ENCODE measurements at regions of chr12 and their contacts with region 1.

Region 1: DNA sequence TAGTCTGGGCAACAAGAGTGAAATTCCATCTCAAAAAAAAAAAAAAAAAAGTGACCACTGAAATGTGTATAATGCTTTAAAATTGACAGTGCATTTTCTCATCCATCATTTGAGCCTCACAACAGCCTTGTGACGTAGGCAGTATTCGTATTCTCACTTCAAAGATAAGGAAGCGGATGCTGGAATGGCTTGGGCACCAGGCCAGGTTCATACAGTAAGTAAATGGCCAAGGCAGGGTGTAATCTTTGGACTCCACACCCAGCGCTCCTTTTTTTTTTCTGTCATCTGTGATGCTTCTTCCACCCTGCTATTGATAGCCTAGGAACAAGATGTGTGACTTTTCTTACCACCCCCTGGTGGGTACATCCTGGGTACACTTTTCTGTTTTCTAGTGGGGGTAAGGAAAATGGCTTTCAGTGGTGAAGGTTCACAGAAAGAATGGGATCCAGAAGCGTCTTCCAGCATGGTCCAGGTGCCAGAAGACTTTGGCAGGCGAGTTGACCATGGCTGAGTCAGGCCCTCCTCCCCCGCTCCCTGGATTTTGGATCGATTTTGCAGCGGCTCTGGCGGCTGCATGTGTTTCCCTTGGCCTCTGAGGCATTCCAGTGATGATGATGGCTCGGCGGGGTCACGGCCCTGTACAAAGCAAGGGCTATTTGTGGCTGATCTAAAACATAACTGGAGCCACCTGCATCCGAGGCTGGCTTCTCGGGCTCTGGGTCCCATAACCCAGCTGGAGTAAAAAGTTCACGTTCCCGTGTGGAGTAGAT is 110.6 kb downstream of the CACNA1C start:
- DNase-seq: peak; percentile 91 to 95 (median 93)
- ATAC-seq: peak; percentile 79 to 94 (median 91)
- H3K4me3 ChIP-seq: no peak overlapping the region
- H3K27ac ChIP-seq: peak overlapping the region; percentile 60 to 86 (median 82)
- H3K4me1 ChIP-seq: peaks cover 4 to 67% (median 43%) of the 10 kb centered on the region in 12 donors
- H3K27me3 ChIP-seq: no peaks in the 10 kb centered on the region
- CTCF ChIP-seq: peak in 4 of 12 donors; percentile 5 to 14 (median 8)
- POLR2A ChIP-seq: no peak

Region 2: GRCh38 chr12:949453-950191 is 1213.7 kb before region 1 on chr12 and contains the start of gene RAD52:
- intact Hi-C with region 1: no loop called
- DNase-seq: peak; percentile 98 to 99 (median 98)
- ATAC-seq: peak; percentile 97 to 98 (median 97)
- H3K4me3 ChIP-seq: peak within 1 kb of the TSS; percentile 68 to 94 (median 82)
- H3K27ac ChIP-seq: peak within 1 kb of the TSS; percentile 76 to 98 (median 92)
- H3K4me1 ChIP-seq: peaks cover 0 to 22% (median 12%) of the 10 kb centered on the region in 12 donors
- H3K27me3 ChIP-seq: no peaks in the 10 kb centered on the region
- CTCF ChIP-seq: peak; percentile 95 to 100 (median 99)
- POLR2A ChIP-seq: peak in 1 of 2 donors; percentile 48
- total RNA-seq, gene RAD52: 4.1 to 9.7 (median 6.2) TPM

Region 3: DNA sequence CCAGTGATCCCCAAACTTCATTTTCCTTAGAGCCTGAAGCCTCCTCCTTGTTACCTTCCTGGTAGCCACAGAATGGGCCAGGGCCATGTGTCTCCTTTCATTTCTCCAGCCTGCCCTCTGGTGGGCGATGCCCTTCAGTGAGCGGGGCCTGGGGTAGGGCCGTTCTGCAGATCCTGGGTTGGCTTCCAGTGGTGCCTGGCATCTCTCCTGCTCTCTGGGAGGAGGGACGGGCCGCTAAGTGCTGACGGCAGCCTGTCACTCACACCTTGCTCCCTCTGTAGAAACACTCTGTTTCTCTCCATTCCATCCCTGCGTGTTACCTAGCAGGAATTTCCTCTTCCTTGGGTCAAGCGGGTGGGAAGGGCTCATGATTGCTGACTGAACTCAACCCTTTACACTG is 121.5 kb after region 1 on chr12:
- intact Hi-C with region 1: loop called in 1 of 10 experiments (anchors 10 kb)
- DNase-seq: peak; percentile 79 to 92 (median 89)
- ATAC-seq: peak; percentile 77 to 87 (median 82)
- H3K4me3 ChIP-seq: no peak overlapping the region
- H3K27ac ChIP-seq: peak overlapping the region in 10 of 12 donors; percentile 58 to 82 (median 76)
- H3K4me1 ChIP-seq: peaks cover 4 to 88% (median 79%) of the 10 kb centered on the region in 12 donors
- H3K27me3 ChIP-seq: no peaks in the 10 kb centered on the region
- CTCF ChIP-seq: peak; percentile 45 to 77 (median 64)
- POLR2A ChIP-seq: no peak

Region 4: DNA sequence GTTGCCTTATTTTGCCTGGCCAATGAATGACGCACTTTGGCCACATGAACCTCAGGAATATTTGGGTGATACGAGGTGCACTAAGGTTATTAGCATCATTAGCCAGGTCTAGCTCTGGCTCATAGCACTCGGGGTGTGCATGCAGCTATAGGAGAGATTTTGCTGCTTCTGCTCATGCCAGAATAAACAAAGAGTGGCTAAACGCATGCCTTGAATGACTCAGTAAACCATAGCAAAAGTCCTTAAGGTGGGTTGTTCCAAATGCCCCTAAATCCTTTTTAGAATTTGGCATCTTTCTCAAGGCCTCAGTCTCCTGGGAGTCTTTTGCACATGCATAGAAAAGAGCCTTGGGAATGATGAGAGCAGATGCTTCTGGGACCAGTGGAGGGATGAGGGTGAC is 287.7 kb after region 1 on chr12:
- intact Hi-C with region 1: no loop called
- DNase-seq: no peak
- ATAC-seq: no peak
- H3K4me3 ChIP-seq: peak overlapping the region in 1 of 12 donors; percentile 36
- H3K27ac ChIP-seq: peak overlapping the region in 6 of 12 donors; percentile 19 to 67 (median 40)
- H3K4me1 ChIP-seq: peaks cover 0 to 35% (median 13%) of the 10 kb centered on the region in 12 donors
- H3K27me3 ChIP-seq: no peaks in the 10 kb centered on the region
- CTCF ChIP-seq: no peak
- POLR2A ChIP-seq: no peak

Measured in heart left ventricle (tissue), 16 donors.